ENCODE measurements at regions of chr12 and their contacts with region 1.

Region 1: GRCh38 chr12:68686595-68687521 is at the start of gene NUP107:
- DNase-seq: peak; percentile 99
- H3K4me3 ChIP-seq: peak within 1 kb of the TSS; percentile 60 to 95 (median 72)
- H3K27ac ChIP-seq: peak within 1 kb of the TSS; percentile 79 to 82 (median 80)
- H3K4me1 ChIP-seq: peaks cover 14 to 24% (median 21%) of the 10 kb centered on the region in 4 donors
- H3K27me3 ChIP-seq: no peaks in the 10 kb centered on the region
- CTCF ChIP-seq: peak in 2 of 3 experiments; percentile 29 to 33
- EP300 ChIP-seq: peak; percentile 79
- POLR2A ChIP-seq: no peak
- total RNA-seq, gene NUP107: 21.6 to 26.1 (median 24.6) TPM

Region 2: GRCh38 chr12:68223083-68223747 is 463.6 kb before region 1 on chr12:
- intact Hi-C with region 1: loop called (anchors 10 kb)
- DNase-seq: peak; percentile 95
- H3K4me3 ChIP-seq: peak overlapping the region in 2 of 4 donors; percentile 21 to 39
- H3K27ac ChIP-seq: peak overlapping the region in 1 of 4 donors; percentile 22
- H3K4me1 ChIP-seq: peaks cover 0 to 22% (median 11%) of the 10 kb centered on the region in 4 donors
- H3K27me3 ChIP-seq: no peaks in the 10 kb centered on the region
- CTCF ChIP-seq: peak; percentile 82 to 85 (median 84)
- EP300 ChIP-seq: no peak
- POLR2A ChIP-seq: no peak

Region 3: DNA sequence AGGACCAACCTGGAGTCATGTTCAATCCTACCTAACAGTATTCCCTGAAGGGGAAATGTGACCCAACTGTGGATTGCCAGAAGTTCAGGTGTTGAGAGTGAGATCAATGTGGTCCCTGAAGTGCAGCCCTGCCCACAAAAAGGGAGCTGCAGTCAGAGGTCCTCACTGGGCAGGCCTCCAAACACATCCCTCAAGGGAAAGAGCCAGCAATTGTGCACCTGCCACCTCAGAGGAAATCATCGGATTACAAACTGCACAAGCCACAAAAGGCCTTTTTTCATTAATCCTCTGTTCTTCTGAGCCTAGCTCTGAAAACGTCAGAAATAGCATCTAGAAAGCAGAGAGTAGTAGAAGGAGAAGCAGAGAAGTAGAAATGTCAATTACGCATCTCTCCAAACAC is 343.9 kb before region 1 on chr12:
- intact Hi-C with region 1: loop called (anchors 5 kb)
- DNase-seq: no peak
- H3K4me3 ChIP-seq: no peak overlapping the region
- H3K27ac ChIP-seq: no peak overlapping the region
- H3K4me1 ChIP-seq: peaks cover 0 to 33% (median 26%) of the 10 kb centered on the region in 4 donors
- H3K27me3 ChIP-seq: no peaks in the 10 kb centered on the region
- CTCF ChIP-seq: no peak
- EP300 ChIP-seq: no peak
- POLR2A ChIP-seq: no peak

Region 4: GRCh38 chr12:68358532-68359485 is 328.0 kb before region 1 on chr12:
- intact Hi-C with region 1: loop called (anchors 2 kb)
- DNase-seq: no peak
- H3K4me3 ChIP-seq: no peak overlapping the region
- H3K27ac ChIP-seq: no peak overlapping the region
- H3K4me1 ChIP-seq: peaks cover 11 to 26% (median 21%) of the 10 kb centered on the region in 4 donors
- H3K27me3 ChIP-seq: no peaks in the 10 kb centered on the region
- CTCF ChIP-seq: peak; percentile 51 to 68 (median 66)
- EP300 ChIP-seq: no peak
- POLR2A ChIP-seq: no peak

Region 5: DNA sequence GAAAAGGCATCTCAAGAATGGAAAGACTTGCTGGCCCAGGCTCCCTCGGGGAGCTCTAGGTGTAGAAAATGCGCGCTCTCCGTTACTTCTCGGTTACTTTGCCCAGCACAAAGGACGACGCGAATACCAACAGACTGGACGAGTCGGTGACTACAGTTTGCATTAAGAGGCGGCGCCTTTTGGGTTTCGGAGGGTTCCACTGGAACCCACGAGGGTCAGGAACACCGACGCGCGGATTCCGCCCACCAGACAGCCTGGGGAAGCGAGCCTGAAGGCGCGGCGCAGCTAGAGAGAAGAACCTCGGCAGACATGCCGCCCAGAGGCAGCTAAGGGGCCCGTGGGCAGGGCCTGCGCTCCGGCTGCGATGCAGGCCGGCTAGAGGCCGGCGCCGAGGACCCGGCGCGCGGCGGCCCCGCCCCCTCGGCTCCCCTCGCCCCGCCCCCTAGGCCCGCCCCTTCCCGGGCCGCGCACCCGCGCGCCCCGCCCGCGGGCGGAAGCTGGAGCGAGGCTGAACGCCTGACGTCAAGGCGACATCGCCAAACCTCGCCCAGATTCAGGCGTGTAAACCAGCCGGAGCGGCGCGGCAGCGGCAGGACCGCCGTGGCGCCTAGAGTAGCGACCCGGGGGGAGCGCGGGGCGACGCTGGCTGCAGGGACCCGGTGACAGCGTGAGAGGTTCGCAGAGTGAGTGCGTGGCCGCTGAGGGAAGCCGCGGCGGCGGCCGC is 76.3 kb before region 1 on chr12 and contains the start of gene RAP1B:
- intact Hi-C with region 1: loop called (anchors 5 kb)
- DNase-seq: peak; percentile 94
- H3K4me3 ChIP-seq: peak within 1 kb of the TSS; percentile 82 to 89 (median 84)
- H3K27ac ChIP-seq: peak within 1 kb of the TSS; percentile 97 to 99 (median 98)
- H3K4me1 ChIP-seq: peaks cover 33 to 44% (median 41%) of the 10 kb centered on the region in 4 donors
- H3K27me3 ChIP-seq: no peaks in the 10 kb centered on the region
- CTCF ChIP-seq: no peak
- EP300 ChIP-seq: no peak
- POLR2A ChIP-seq: peak; percentile 75
- total RNA-seq, gene RAP1B: 114 to 181 (median 149) TPM

Region 6: GRCh38 chr12:68915055-68915454 is 228.2 kb after region 1 on chr12:
- intact Hi-C with region 1: no loop called
- DNase-seq: no peak
- H3K4me3 ChIP-seq: no peak overlapping the region
- H3K27ac ChIP-seq: peak overlapping the region in 1 of 4 donors; percentile 34
- H3K4me1 ChIP-seq: peaks cover 0 to 5% (median 0%) of the 10 kb centered on the region in 4 donors
- H3K27me3 ChIP-seq: no peaks in the 10 kb centered on the region
- CTCF ChIP-seq: no peak
- EP300 ChIP-seq: no peak
- POLR2A ChIP-seq: no peak